Common myeloid progenitor, CD34-positive (primary cell): ENCODE measurements at regions of chr10 and their contacts with region 1.

Region 1: GRCh38 chr10:43348511-43349312 is 22.7 kb upstream of the FXYD4 start:
- DNase-seq: peak; percentile 88 to 94 (median 92)
- H3K4me3 ChIP-seq: no peak overlapping the region
- H3K27ac ChIP-seq: no peak overlapping the region
- H3K4me1 ChIP-seq: peaks cover 0 to 6% (median 2%) of the 10 kb centered on the region in 4 experiments
- H3K27me3 ChIP-seq: peaks cover 0 to 19% (median 8%) of the 10 kb centered on the region in 5 experiments

Region 2: DNA sequence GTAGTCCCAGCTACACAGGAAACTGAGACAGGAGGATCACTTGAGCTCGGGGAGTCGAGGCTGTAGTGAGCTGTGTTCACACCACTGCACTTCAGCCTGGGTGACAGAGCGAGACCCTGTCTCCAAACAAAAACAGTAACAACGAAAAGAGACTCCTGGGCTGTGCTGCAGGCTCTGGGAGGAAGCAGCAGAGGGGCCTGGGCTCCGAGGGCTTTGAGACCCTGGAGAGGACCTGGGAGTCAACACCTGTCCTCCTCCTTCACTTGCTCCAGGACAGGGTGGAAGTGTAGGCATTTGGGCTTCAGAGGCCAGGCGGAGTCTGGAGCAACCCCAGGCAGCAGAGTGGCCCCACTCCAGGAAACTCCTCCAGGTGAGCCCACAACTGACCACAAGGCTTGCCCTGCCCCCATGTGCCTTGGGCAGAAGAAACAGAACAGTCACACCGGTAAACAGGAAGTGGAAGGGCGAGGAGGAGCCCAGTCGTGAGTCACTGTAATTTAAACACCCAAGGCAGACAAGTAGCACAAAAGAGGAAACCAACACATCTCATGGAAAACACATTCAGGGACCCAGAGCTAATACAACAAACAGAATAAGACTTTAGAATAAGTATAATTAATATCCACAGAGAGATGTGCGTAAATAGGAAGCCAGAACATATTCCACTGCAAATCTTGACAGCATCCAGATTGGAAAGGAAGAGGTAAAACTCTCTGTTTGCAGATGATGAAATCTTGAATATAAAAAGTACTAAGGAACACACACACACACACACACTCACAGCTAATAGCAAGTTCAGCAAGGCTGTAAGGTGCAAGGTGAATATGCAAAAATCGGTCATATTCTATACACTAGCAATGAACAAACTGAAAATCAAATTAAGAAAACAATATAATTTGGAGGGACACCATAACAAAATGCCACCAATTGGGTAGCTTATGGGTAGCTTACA is 61.4 kb before region 1 on chr10:
- CTCF ChIA-PET with region 1: interaction called, 57 read pairs
- POLR2A ChIA-PET with region 1: no interaction called
- DNase-seq: peak; percentile 37 to 88 (median 80)
- H3K4me3 ChIP-seq: peak overlapping the region in 1 of 7 experiments; percentile 26
- H3K27ac ChIP-seq: no peak overlapping the region
- H3K4me1 ChIP-seq: peaks cover 5 to 18% (median 14%) of the 10 kb centered on the region in 4 experiments
- H3K27me3 ChIP-seq: peaks cover 0 to 15% (median 8%) of the 10 kb centered on the region in 5 experiments

Region 3: DNA sequence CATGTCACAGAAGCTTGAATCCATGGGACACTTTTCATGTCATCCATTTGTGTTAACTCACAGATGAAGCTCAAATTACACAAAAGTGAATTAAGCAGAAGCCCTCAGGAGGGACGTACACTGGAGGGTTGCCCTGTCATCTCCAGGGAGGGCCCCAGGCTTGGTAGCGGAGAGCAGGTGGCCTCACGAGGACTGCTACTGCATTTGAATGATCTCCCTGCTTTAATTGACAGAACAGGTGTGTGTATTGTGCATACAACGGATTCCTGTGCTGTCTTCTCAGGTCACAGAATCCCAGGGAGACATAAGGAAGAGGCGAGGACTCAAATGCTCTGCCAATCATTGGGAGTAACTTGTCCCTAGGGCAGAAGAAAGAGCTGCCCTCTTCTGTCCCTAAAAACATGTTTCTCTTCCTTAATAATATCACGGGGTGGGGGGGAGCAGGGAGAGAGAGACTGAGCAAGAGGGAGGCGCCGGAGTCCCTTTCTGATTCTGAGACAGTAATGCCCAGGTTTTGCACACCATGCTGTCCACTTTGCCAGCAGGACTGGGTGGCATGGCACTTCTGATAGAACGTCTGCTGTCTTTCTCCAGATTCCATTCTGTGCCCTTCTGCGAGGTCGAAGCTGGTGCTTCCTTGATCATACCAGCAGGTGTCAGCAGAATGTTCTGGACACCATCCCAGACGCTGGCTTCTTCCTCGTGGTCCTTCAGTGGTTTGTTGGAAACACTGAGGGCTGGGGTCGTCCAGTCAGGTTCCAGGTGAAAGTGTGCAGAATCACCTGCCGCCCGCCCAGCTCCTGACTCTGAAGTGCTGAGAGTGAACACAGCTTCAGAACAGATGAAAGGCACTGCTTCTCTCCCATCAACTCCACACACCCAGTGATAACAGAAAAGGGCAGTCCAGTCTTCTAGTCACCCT is 55.7 kb before region 1 on chr10:
- CTCF ChIA-PET with region 1: interaction called, 57 read pairs
- POLR2A ChIA-PET with region 1: no interaction called
- DNase-seq: peak; percentile 42 to 60 (median 56)
- H3K4me3 ChIP-seq: peak overlapping the region in 1 of 7 experiments; percentile 11
- H3K27ac ChIP-seq: no peak overlapping the region
- H3K4me1 ChIP-seq: peaks cover 0 to 11% (median 4%) of the 10 kb centered on the region in 4 experiments
- H3K27me3 ChIP-seq: peaks cover 0 to 2% (median 0%) of the 10 kb centered on the region in 5 experiments

Region 4: GRCh38 chr10:43304687-43305340 is 43.9 kb before region 1 on chr10:
- CTCF ChIA-PET with region 1: interaction called, 13 read pairs
- POLR2A ChIA-PET with region 1: no interaction called
- DNase-seq: peak; percentile 50 to 76 (median 61)
- H3K4me3 ChIP-seq: peak overlapping the region; percentile 35 to 72 (median 57)
- H3K27ac ChIP-seq: no peak overlapping the region
- H3K4me1 ChIP-seq: peaks cover 3 to 9% (median 7%) of the 10 kb centered on the region in 4 experiments
- H3K27me3 ChIP-seq: peaks cover 0 to 5% (median 0%) of the 10 kb centered on the region in 5 experiments

Region 5: DNA sequence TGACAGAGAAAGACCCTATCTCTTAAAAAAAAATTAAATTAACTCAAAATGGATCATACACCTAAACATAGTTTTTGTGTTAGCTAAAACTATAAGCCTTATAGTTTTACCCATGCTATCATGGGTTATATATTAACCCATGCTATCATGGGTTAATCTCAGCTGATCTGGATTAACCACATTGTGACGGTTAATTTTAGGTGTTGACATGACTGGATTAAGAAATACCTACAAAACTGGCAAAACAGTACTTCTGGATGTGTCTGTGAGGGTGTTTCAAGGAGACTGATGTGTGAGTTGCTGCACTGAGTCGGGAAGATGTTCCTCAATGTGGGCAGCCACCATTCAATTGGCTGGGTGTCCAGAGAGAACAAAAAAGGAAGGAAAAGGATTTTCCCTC is 21.5 kb before region 1 on chr10:
- CTCF ChIA-PET with region 1: interaction called, 13 read pairs
- POLR2A ChIA-PET with region 1: no interaction called
- DNase-seq: no peak
- H3K4me3 ChIP-seq: no peak overlapping the region
- H3K27ac ChIP-seq: no peak overlapping the region
- H3K4me1 ChIP-seq: peaks cover 5 to 16% (median 12%) of the 10 kb centered on the region in 4 experiments
- H3K27me3 ChIP-seq: peaks cover 0 to 5% (median 0%) of the 10 kb centered on the region in 5 experiments

Region 6: GRCh38 chr10:43360086-43360485 is 11.4 kb after region 1 on chr10:
- CTCF ChIA-PET with region 1: interaction called, 10 read pairs
- POLR2A ChIA-PET with region 1: no interaction called
- DNase-seq: no peak
- H3K4me3 ChIP-seq: no peak overlapping the region
- H3K27ac ChIP-seq: no peak overlapping the region
- H3K4me1 ChIP-seq: peaks cover 0 to 19% (median 11%) of the 10 kb centered on the region in 4 experiments
- H3K27me3 ChIP-seq: no peaks in the 10 kb centered on the region

Region 7: DNA sequence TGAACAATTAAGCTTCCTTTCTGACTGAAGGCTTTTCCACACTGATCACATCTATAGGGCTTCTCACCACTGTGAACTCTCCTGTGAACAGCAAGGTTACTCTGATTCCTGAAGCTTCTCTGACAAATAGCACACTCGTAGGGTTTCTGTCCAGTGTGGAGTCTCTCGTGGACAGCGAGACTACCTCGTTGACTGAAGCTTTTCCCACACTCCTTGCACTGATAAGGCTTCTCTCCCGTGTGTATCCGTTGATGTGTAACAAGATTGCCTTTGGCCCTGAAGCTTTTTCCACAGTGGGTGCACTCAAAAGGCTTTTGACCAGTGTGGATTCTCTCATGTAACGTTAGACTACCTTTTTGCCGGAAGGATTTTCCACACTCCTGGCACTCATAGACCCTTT is 295.5 kb after region 1 on chr10:
- CTCF ChIA-PET with region 1: no interaction called
- POLR2A ChIA-PET with region 1: no interaction called
- DNase-seq: peak in 2 of 3 donors; percentile 22 to 31
- H3K4me3 ChIP-seq: peak overlapping the region in 2 of 7 experiments; percentile 16 to 19
- H3K27ac ChIP-seq: no peak overlapping the region
- H3K4me1 ChIP-seq: peaks cover 0 to 9% (median 4%) of the 10 kb centered on the region in 4 experiments
- H3K27me3 ChIP-seq: no peaks in the 10 kb centered on the region